ENCODE measurements at regions of chr2 and their contacts with region 1.

Region 1: GRCh38 chr2:3180082-3180908 is 197.3 kb downstream of the EIPR1 start:
- DNase-seq: no peak
- H3K4me3 ChIP-seq: no peak overlapping the region
- H3K27ac ChIP-seq: no peak overlapping the region
- H3K4me1 ChIP-seq: no peaks in the 10 kb centered on the region
- H3K27me3 ChIP-seq: no peaks in the 10 kb centered on the region
- CTCF ChIP-seq: no peak
- POLR2A ChIP-seq: no peak

Region 2: DNA sequence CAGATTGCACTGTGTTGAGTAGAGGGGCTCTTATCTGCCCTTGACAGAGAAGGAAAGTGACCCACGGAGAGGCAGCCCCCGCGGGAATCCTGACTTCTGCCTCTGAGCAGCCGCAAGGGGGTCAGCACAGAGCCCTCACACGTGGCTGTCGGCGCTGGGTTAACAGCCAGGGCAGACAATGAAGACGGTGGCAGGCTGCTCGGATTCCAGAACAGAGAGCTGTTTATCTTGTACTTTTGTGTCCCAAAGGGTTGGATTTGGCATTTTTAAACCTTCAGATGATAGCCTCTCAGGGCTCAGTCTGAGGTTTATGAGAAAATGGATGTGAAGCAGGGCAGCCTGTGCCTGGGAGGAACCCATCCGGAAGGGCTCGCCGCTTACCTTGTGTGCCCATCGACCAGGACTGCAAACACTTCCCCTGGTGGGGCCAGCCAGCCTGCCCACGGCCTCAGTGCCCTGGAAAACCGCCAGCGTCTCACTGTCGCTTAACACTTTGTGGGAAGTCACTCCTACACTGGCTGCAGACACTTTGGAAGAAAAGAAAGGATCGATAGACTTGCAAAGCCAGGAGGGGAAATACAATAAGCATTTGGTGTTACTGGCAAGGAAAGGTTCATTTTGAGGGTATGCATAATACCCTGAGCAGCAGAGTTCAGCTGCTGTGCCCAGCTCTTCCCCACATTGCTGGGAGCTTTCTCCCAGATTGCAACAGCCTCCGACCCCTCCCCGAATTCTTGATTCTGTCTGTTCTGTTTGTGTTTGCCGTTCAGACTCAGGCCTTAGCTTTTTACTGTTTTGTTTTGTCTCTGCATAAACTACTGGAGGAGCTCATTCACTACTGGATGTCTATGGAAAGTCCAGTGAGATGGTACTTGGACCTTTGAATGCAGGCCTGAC is 523.9 kb before region 1 on chr2:
- intact Hi-C with region 1: no loop called
- DNase-seq: no peak
- H3K4me3 ChIP-seq: no peak overlapping the region
- H3K27ac ChIP-seq: no peak overlapping the region
- H3K4me1 ChIP-seq: peaks cover 0 to 5% of the 10 kb centered on the region in 2 donors
- H3K27me3 ChIP-seq: no peaks in the 10 kb centered on the region
- CTCF ChIP-seq: no peak
- POLR2A ChIP-seq: no peak

Region 3: GRCh38 chr2:3459185-3460015 is 279.1 kb after region 1 on chr2:
- intact Hi-C with region 1: loop called in 1 of 2 experiments (anchors 10 kb)
- DNase-seq: peak in 1 of 7 donors; percentile 52
- H3K4me3 ChIP-seq: no peak overlapping the region
- H3K27ac ChIP-seq: no peak overlapping the region
- H3K4me1 ChIP-seq: peaks cover 0 to 16% of the 10 kb centered on the region in 2 donors
- H3K27me3 ChIP-seq: no peaks in the 10 kb centered on the region
- CTCF ChIP-seq: no peak
- POLR2A ChIP-seq: no peak